ENCODE measurements at regions of chrX and their contacts with region 1.

Region 1: DNA sequence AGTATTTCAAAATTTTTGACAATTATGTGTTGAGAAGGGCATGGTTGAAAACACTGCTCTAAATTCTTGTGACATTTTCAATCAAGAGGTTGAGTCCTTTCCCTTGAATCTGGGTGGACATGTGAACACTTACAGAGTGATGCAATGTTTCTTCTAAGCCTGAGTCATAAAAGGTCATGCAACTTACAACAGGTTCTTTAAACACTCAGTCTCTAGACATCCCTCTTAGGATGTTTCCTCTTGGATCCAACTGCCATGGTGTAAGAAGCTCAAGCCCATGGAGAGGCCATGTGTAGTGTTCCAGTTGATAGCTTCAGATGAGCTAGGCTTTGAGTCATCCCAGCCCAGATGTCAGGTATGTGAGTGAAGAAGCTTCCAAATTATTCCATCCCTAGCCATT is 232.2 kb upstream of the MAOA start:
- DNase-seq: no peak

Region 2: DNA sequence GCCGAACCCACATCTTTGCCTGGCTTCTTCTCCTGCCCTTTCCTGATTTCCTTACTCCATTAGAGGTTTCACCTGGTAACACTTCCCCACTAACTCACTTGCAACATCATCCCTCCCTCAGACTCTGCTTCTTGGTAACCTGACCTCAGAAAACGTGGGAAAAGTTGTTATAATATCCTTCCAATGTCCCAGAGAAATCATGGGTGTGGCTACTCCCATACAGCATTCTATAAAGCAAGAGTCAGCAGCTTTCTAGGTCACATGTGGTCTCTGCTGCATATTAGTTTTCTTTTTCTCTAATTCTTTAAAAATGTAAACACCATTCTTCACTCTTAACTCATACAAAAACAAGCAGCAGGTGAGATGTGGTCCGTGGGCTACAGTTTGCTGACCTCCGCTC is 50.8 kb before region 1 on chrX:
- intact Hi-C with region 1: loop called (anchors 2 kb)
- DNase-seq: no peak

Region 3: GRCh38 chrX:43559644-43560043 is 135.8 kb after region 1 on chrX:
- intact Hi-C with region 1: no loop called
- DNase-seq: peak in 5 of 10 donors; percentile 14 to 76 (median 33)

Measured in posterior cingulate gyrus (tissue), 11 donors.